Ascending aorta (tissue), 2 donors: ENCODE measurements at regions of chr16 and their contacts with region 1.

Region 1: DNA sequence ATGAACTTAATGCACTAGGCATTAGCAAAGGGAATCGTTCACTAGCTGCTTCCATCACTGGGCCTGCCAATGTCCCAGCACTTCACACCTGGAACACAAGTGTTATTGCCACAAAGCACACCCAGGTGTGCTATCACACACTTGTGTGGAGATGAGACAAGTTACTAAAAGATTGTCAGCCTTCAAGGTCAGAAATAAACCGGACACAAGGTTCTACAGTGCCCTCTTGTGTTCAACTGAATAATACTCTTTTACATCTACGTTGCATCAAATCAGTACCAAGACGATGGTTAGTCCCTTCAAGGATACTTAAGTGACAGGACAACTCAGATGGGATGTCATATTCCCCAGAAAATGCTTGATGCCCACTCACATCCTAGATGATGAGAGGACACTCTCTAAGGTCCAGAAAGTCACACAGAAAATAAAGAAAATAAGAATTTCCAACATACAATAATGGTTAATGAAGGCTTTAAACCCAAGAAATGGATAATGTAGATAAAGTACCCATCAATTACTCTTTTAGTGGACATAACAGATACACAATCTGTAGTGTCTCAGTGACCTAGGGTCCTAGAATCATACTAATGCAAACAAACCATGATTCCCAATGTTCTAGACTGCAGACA is 16.4 kb upstream of the GLG1 start:
- DNase-seq: no peak
- H3K4me3 ChIP-seq: no peak overlapping the region
- H3K27ac ChIP-seq: no peak overlapping the region
- H3K4me1 ChIP-seq: no peaks in the 10 kb centered on the region
- H3K27me3 ChIP-seq: no peaks in the 10 kb centered on the region
- CTCF ChIP-seq: peak; percentile 31 to 61 (median 43)

Region 2: GRCh38 chr16:73584157-73584556 is 1039.2 kb before region 1 on chr16:
- intact Hi-C with region 1: no loop called
- DNase-seq: no peak
- H3K4me3 ChIP-seq: no peak overlapping the region
- H3K27ac ChIP-seq: no peak overlapping the region
- H3K4me1 ChIP-seq: no peaks in the 10 kb centered on the region
- H3K27me3 ChIP-seq: no peaks in the 10 kb centered on the region
- CTCF ChIP-seq: no peak

Region 3: DNA sequence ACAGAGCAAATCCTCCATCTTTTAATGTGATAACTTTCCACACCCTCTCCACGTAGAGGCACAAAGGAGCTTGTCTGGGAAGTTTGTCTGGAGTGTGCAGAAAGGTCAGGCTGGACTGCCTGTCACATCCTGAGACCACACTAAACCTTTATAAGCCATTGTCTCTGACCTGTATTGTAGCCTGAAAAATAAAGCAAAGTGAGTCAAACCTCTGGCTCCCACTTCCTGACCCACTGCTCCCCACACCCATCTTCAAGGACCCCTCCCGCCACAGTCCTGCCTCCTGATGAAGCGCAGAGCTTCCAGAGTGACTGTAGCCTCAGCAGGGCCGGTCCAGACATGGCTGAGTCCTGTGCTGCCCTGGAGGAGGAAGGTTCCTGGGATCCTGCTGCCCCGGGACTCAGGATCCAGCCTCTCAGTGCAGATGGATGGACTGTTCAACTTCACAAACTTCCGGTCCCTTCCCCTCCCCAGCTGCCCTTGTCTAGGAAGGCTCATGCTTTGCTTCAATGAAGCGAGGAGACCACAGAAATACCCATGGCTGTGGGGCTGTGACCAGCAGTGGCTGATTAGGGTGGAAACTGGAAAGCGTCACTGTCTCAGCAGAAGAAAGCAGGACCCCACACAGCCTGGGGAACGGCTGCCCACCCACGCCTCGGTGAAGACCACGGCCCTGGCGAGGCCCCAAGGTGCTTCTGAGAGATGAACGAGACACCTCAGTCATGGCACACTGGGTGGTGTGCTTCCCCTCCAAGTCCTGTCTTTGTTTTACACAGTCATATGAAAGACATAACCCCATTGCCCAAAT is 171.2 kb before region 1 on chr16:
- intact Hi-C with region 1: loop called (anchors 10 kb)
- DNase-seq: no peak
- H3K4me3 ChIP-seq: no peak overlapping the region
- H3K27ac ChIP-seq: no peak overlapping the region
- H3K4me1 ChIP-seq: peaks cover 6 to 10% of the 10 kb centered on the region in 2 donors
- H3K27me3 ChIP-seq: no peaks in the 10 kb centered on the region
- CTCF ChIP-seq: no peak

Region 4: GRCh38 chr16:74501484-74502479 is 121.5 kb before region 1 on chr16:
- intact Hi-C with region 1: loop called (anchors 5 kb)
- DNase-seq: no peak
- H3K4me3 ChIP-seq: no peak overlapping the region
- H3K27ac ChIP-seq: peak overlapping the region; percentile 56 to 61
- H3K4me1 ChIP-seq: peaks cover 0 to 13% of the 10 kb centered on the region in 2 donors
- H3K27me3 ChIP-seq: no peaks in the 10 kb centered on the region
- CTCF ChIP-seq: no peak